ENCODE measurements at regions of chr4 and their contacts with region 1.

Region 1: GRCh38 chr4:147596981-147597380 is 20.2 kb upstream of the TMEM184C start:
- DNase-seq: peak; percentile 87
- H3K4me3 ChIP-seq: no peak overlapping the region
- H3K27ac ChIP-seq: peak overlapping the region; percentile 92
- H3K27me3 ChIP-seq: no peaks in the 10 kb centered on the region
- CTCF ChIP-seq: no peak

Region 2: DNA sequence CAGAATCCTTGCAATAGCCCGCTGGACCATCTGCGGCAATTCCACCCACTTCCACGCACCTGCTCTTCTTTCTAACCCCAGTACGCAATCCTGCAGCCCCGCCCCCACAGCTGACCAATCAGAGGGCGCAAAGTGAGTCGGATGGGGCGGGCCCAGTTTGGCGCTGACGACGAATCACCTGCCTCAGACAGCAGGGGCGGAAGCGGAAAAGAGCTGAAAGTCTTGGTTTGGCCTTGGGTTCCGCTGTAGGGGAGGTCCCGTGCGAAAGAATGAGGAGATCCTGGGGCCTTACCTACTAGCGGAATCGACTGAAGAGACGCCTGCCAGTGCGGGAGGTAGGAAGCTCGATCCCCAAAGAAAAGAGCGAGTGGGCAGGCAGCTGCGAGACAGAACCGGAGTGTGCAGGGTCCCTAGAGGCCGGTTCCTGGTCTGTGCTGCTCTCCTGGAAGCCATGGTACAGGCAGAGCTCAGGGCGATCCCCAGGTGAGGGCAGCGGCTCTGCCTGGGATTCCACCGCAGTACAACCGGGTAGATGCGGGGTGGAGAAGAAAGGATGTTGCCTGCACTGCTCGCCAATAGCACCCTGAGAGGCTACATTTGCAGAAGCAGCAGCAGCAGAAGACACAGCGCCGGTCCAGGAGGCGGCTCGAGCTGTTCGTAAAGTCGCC is 20.3 kb after region 1 on chr4 and contains the start of gene TMEM184C:
- CTCF ChIA-PET with region 1: interaction called, 6 read pairs
- POLR2A ChIA-PET with region 1: interaction called, 11 read pairs
- DNase-seq: peak; percentile 84
- H3K4me3 ChIP-seq: peak within 1 kb of the TSS; percentile 76
- H3K27ac ChIP-seq: peak within 1 kb of the TSS; percentile 66
- H3K27me3 ChIP-seq: no peaks in the 10 kb centered on the region
- CTCF ChIP-seq: peak; percentile 24; the same call in 1 of the 2 replicates
- polyA plus RNA-seq, gene TMEM184C: 33.3 and 40.6 TPM in 2 replicates

Measured in AG04450 (cell line).